Gastrocnemius medialis (tissue), 4 donors: ENCODE measurements at regions of chr14 and their contacts with region 1.

Region 1: GRCh38 chr14:22084393-22085281 is 411.0 kb upstream of the OR4E1 start:
- DNase-seq: no peak
- ATAC-seq: peak in 1 of 2 donors; percentile 16
- H3K4me3 ChIP-seq: no peak overlapping the region
- H3K27ac ChIP-seq: no peak overlapping the region
- H3K4me1 ChIP-seq: no peaks in the 10 kb centered on the region
- H3K27me3 ChIP-seq: no peaks in the 10 kb centered on the region
- CTCF ChIP-seq: peak in 3 of 5 experiments; percentile 36 to 50 (median 45)
- POLR2A ChIP-seq: no peak

Region 2: GRCh38 chr14:22010545-22011252 is 73.9 kb before region 1 on chr14:
- in situ Hi-C with region 1: no loop called
- intact Hi-C with region 1: loop called (anchors 5 kb)
- DNase-seq: no peak
- ATAC-seq: peak; percentile 28 to 42
- H3K4me3 ChIP-seq: no peak overlapping the region
- H3K27ac ChIP-seq: peak overlapping the region; percentile 12 to 62 (median 36)
- H3K4me1 ChIP-seq: no peaks in the 10 kb centered on the region
- H3K27me3 ChIP-seq: no peaks in the 10 kb centered on the region
- CTCF ChIP-seq: no peak
- POLR2A ChIP-seq: no peak